Panc1 (cell line): ENCODE measurements at regions of chr11 and their contacts with region 1.

Region 1: GRCh38 chr11:123246749-123247495 is 51.9 kb upstream of the CLMP start:
- DNase-seq: peak; percentile 61
- ATAC-seq: peak; percentile 97
- H3K4me3 ChIP-seq: peak overlapping the region in 1 of 2 experiments; percentile 10; a peak in 2 of 4 replicates
- H3K27ac ChIP-seq: no peak overlapping the region
- H3K4me1 ChIP-seq: peaks cover 2% of the 10 kb centered on the region; the same call in 1 of the 2 replicates
- H3K27me3 ChIP-seq: peaks cover 2% of the 10 kb centered on the region; the same call in 1 of the 2 replicates
- CTCF ChIP-seq: peak; percentile 99

Region 2: GRCh38 chr11:123110356-123110755 is 136.6 kb before region 1 on chr11:
- CTCF ChIA-PET with region 1: interaction called, 29 read pairs
- POLR2A ChIA-PET with region 1: no interaction called
- in situ Hi-C with region 1: no loop called
- intact Hi-C with region 1: loop called (anchors 1 kb)
- DNase-seq: no peak
- ATAC-seq: no peak
- H3K4me3 ChIP-seq: no peak overlapping the region
- H3K27ac ChIP-seq: no peak overlapping the region
- H3K4me1 ChIP-seq: no peaks in the 10 kb centered on the region
- H3K27me3 ChIP-seq: no peaks in the 10 kb centered on the region
- CTCF ChIP-seq: no peak

Region 3: GRCh38 chr11:123166071-123166559 is 80.8 kb before region 1 on chr11:
- CTCF ChIA-PET with region 1: interaction called, 12 read pairs
- POLR2A ChIA-PET with region 1: no interaction called
- in situ Hi-C with region 1: loop called (anchors 5 kb)
- intact Hi-C with region 1: no loop called
- DNase-seq: no peak
- ATAC-seq: peak; percentile 52
- H3K4me3 ChIP-seq: no peak overlapping the region
- H3K27ac ChIP-seq: no peak overlapping the region
- H3K4me1 ChIP-seq: no peaks in the 10 kb centered on the region
- H3K27me3 ChIP-seq: no peaks in the 10 kb centered on the region
- CTCF ChIP-seq: peak; percentile 82

Region 4: DNA sequence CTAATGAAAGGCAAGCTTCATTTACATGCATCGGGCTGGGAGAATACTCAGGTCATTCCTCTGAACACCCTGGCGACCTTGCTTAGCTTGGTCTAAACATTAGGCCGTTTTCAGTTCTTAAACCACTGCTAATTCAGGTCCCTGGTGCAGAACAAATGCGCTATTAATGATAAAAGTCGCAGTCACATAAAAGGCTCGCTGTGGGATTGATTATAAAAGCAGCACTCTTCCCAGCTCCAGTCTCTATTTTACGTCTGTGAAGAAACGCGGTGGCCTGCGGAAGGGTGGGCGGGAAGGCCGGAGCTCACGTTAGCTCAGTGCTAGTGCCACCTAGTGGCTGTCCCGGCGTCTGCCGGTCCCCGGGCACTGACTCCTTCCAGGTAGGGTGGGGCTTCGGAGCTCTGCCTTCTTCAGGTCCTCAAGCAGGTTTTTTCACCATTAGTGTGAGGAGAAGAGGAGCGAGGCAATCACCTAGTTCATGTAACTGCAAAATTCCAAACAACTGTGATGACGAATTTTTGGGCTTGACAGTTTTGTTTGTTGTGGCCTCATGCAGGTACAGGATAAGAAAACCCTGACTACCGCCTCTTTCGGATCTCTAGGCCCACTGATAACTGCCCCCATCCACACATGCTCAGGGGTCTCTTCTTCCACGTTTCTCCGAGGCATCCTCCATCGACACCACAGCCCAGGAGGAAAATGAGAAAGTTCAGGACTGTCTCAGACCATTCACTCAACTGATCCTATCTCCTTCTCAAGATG is 14.6 kb after region 1 on chr11:
- CTCF ChIA-PET with region 1: interaction called, 16 read pairs
- POLR2A ChIA-PET with region 1: interaction called, 6 read pairs
- in situ Hi-C with region 1: no loop called
- intact Hi-C with region 1: no loop called
- DNase-seq: peak; percentile 13
- ATAC-seq: peak; percentile 97
- H3K4me3 ChIP-seq: peak overlapping the region; percentile 21 to 60
- H3K27ac ChIP-seq: 0 out of 2 replicates have a peak overlapping the region, but pooled peaks have one; percentile 34
- H3K4me1 ChIP-seq: peaks cover 7% of the 10 kb centered on the region; the same call in 1 of the 2 replicates
- H3K27me3 ChIP-seq: peaks cover 10% of the 10 kb centered on the region; the same call in 1 of the 2 replicates
- CTCF ChIP-seq: peak; percentile 99